Posterior vena cava (tissue), 2 donors: ENCODE measurements at regions of chr2 and their contacts with region 1.

Region 1: GRCh38 chr2:66581339-66582103 is 146.6 kb downstream of the MEIS1 start:
- DNase-seq: peak; percentile 84

Region 2: DNA sequence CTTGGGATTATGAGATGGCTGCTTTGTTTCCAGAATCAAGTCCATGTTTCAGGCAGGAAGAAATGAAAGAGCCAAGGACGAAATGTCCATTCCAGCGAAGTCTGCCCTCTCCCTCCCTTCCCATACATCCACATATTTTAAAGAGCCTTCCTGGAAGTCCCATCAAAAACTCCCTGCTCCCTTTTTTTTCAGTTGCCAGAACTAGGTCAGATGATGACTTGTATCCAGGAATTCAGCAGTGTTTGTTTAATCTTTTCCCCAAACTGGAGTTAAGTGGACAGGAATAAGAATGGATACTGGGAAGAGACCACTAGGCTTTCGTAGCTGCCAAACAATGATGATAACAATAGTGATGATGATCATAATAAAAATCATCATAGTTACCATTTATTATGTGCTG is 52.1 kb after region 1 on chr2:
- intact Hi-C with region 1: no loop called
- DNase-seq: no peak

Region 3: GRCh38 chr2:66691031-66691507 is 109.5 kb after region 1 on chr2:
- intact Hi-C with region 1: loop called in 1 of 2 experiments (anchors 5 kb)
- DNase-seq: no peak